Gastrocnemius medialis (tissue), 4 donors: ENCODE measurements at regions of chr14 and their contacts with region 1.

Region 1: GRCh38 chr14:69611201-69612011 is at the start of gene SUSD6:
- DNase-seq: peak; percentile 81 to 88
- ATAC-seq: peak; percentile 81 to 83
- H3K4me3 ChIP-seq: peak within 1 kb of the TSS; percentile 54 to 89 (median 74)
- H3K27ac ChIP-seq: peak within 1 kb of the TSS; percentile 91 to 99 (median 96)
- H3K4me1 ChIP-seq: peaks cover 49% of the 10 kb centered on the region in 2 donors
- H3K27me3 ChIP-seq: no peaks in the 10 kb centered on the region
- CTCF ChIP-seq: no peak
- POLR2A ChIP-seq: peak; percentile 78 to 83
- total RNA-seq, gene SUSD6: 11.9 to 26.3 (median 16.2) TPM

Region 2: DNA sequence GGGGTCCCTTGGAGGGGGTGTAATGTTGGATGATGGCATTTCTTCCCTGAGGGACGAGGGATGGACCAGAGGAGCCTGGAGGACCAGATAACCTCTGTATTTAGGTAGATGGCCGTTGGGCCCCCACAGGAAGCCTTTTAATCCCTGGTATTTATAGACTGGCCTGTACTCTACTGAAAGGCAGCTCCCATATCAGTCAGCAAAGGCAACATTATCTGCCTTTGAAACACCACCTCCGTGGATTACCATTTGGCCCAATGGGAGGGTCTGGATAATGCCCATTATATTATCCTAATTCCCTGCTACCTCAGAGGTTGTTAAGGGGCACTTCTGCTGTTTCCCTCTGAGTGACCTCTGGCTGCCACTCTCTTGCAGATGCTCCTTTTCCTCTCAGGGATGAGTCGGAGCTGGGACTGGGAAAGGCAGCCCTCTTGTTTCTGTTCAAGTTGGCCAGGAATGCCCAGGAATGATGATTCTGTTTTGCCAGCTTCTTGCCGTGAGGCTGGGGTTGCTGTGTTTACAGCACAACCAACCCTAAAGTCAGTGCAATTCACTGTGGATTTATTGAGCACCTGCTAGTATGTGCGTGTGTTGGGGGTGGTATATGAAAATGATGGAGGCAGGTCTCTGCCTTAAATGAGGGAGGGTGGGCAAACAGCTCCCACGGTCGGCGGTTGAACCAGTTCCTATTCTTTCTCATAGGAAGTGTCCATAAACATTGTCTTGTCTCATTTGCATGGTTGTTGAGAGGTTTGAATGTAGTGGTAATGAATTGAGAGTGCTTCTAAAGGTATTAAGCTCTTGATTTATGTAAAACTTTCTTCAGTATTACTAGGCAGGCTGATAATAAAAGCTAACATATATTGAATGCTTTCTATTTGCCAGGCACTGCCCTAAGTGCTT is 18.1 kb after region 1 on chr14:
- in situ Hi-C with region 1: no loop called
- intact Hi-C with region 1: loop called (anchors 2 kb)
- DNase-seq: no peak
- ATAC-seq: no peak
- H3K4me3 ChIP-seq: no peak overlapping the region
- H3K27ac ChIP-seq: no peak overlapping the region
- H3K4me1 ChIP-seq: peaks cover 65 to 80% of the 10 kb centered on the region in 2 donors
- H3K27me3 ChIP-seq: no peaks in the 10 kb centered on the region
- CTCF ChIP-seq: no peak
- POLR2A ChIP-seq: no peak

Region 3: GRCh38 chr14:69643443-69644164 is 32.2 kb after region 1 on chr14:
- in situ Hi-C with region 1: no loop called
- intact Hi-C with region 1: loop called (anchors 1 kb)
- DNase-seq: peak; percentile 81 to 86
- ATAC-seq: peak; percentile 99
- H3K4me3 ChIP-seq: no peak overlapping the region
- H3K27ac ChIP-seq: peak overlapping the region; percentile 74 to 82 (median 78)
- H3K4me1 ChIP-seq: peaks cover 46 to 54% of the 10 kb centered on the region in 2 donors
- H3K27me3 ChIP-seq: no peaks in the 10 kb centered on the region
- CTCF ChIP-seq: no peak
- POLR2A ChIP-seq: no peak